CD4-positive, alpha-beta T cell (primary cell): ENCODE measurements at regions of chr10 and their contacts with region 1.

Region 1: DNA sequence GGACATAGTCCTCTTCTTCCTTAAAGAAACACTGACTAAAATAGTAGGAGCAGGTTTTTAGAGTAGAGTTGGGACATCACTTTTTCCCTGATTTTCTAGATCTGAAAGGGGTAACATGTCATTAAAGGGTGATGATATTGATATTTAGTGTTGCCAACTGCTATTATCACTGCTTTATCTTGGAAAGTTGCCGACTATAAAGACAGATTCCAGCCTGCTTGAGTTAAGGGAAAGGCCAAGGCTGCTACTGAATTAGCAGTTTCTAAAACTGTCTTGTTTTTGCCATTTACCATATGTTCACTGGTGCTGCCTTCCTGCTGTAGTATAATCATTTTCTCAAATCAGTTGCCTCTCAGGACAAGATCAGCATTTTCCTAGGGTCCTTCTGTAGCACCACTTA is 29.7 kb downstream of the AP3M1 start:
- DNase-seq: no peak
- ATAC-seq: no peak
- H3K4me3 ChIP-seq: no peak overlapping the region
- H3K4me3 Mint-ChIP-seq: no peak overlapping the region
- H3K27ac ChIP-seq: no peak overlapping the region
- H3K27ac Mint-ChIP-seq: peak overlapping the region; percentile 11
- H3K4me1 ChIP-seq: no peaks in the 10 kb centered on the region
- H3K4me1 Mint-ChIP-seq: peaks cover under 1% of the 10 kb centered on the region
- H3K27me3 ChIP-seq: no peaks in the 10 kb centered on the region
- H3K27me3 Mint-ChIP-seq: no peaks in the 10 kb centered on the region
- CTCF ChIP-seq: no peak

Region 2: DNA sequence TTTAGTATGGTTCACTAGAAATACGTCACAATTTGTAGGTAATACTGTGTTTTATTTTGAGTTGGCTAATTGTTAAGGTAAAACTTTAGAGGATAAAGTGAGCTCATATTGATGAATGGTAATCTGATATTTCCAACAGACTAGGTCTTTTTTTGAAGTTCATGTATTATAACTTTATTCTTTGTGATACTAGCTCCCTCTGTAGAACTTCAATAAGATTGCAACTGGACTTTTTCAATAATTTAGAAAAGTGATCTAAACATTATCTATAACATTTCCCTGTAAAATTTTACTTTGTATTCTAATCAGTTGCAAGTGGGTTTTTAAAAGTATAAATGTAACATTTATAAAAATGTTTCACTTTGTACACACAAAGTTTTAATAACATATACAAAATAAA is 113.7 kb after region 1 on chr10:
- CTCF ChIA-PET with region 1: no interaction called
- POLR2A ChIA-PET with region 1: no interaction called
- intact Hi-C with region 1: loop called (anchors 5 to 10 kb)
- DNase-seq: peak in 2 of 14 experiments; percentile 16 to 35
- ATAC-seq: no peak
- H3K4me3 ChIP-seq: no peak overlapping the region
- H3K4me3 Mint-ChIP-seq: no peak overlapping the region
- H3K27ac ChIP-seq: no peak overlapping the region
- H3K27ac Mint-ChIP-seq: no peak overlapping the region
- H3K4me1 ChIP-seq: no peaks in the 10 kb centered on the region
- H3K4me1 Mint-ChIP-seq: peaks cover 11% of the 10 kb centered on the region
- H3K27me3 ChIP-seq: no peaks in the 10 kb centered on the region
- H3K27me3 Mint-ChIP-seq: no peaks in the 10 kb centered on the region
- CTCF ChIP-seq: peak; percentile 66